Motor neuron (in vitro differentiated cells): ENCODE measurements at regions of chr10 and their contacts with region 1.

Region 1: DNA sequence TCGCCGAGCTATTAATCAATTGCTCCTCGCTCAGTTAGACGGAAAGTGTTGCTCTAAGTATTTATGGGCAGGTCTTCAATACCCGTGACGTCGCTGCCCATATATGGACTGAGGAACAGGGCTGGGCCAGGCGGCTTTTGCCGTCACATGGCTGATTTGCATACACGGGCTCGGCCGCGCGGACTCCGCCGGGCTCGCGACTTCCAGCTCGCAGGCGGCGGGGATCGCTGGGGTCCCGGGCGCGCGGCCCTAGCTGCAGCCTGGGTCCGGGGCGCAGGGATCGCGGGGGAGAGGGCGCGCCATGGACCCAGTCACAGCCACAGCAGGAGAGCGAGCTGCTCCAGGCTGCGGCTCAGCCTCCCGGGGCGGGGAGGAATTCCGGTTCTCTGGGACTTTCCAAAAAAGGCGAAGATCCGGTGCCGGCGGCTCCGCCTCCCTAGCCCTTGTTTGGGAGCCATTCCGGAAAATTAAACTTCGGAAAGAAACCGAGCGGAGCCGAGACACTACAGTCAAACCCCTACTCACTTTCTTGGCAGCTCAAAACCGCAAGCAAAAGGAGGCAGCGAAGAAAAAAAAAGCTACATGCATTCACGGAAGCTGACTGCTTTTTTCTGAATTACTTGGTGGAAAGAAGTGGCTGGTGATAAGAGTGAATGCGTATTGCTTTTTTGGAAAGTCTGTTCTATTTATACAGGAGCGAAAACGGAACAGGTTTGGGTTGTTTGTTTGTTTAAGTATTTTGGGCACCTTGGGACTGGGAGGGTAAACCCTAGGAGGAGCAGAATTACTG is at the start of gene EGR2:
- ATAC-seq: peak; percentile 81 to 89 (median 84)
- H3K4me3 ChIP-seq: peak within 1 kb of the TSS; percentile 65 to 97 (median 81)
- H3K27ac ChIP-seq: peak within 1 kb of the TSS in 1 of 2 donors; percentile 43
- H3K4me1 ChIP-seq: peaks cover 7 to 20% of the 10 kb centered on the region in 2 donors
- total RNA-seq, gene EGR2: 0.33 to 9.9 (median 0.87) TPM

Region 2: DNA sequence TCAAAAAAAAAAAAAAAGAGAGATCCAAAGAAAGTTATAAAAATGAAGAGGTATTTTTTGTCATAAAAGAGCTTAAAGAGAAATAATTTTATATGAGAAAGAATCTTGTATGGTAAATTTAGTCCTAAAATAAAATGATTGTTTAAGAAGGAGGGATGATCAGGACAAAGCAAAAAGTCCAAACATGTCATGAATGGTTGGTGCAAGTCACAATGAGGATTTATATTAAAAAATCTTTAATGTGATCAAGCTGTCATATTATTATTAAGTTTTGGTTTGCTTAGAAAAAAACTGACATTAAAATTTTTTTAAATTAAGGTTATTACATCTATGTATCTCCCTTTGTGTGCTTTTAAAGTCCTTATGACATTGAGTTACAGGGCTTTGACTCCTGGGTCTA is 1583.7 kb before region 1 on chr10:
- in situ Hi-C with region 1: no loop called
- ATAC-seq: no peak
- H3K4me3 ChIP-seq: no peak overlapping the region
- H3K27ac ChIP-seq: no peak overlapping the region
- H3K4me1 ChIP-seq: no peaks in the 10 kb centered on the region

Region 3: GRCh38 chr10:62610649-62611229 is 205.8 kb before region 1 on chr10:
- in situ Hi-C with region 1: loop called in 3 of 9 experiments (anchors 25 kb)
- ATAC-seq: peak; percentile 56 to 95 (median 74)
- H3K4me3 ChIP-seq: no peak overlapping the region
- H3K27ac ChIP-seq: no peak overlapping the region
- H3K4me1 ChIP-seq: peaks cover 0 to 2% of the 10 kb centered on the region in 2 donors